ENCODE measurements at regions of chr20 and their contacts with region 1.

Region 1: DNA sequence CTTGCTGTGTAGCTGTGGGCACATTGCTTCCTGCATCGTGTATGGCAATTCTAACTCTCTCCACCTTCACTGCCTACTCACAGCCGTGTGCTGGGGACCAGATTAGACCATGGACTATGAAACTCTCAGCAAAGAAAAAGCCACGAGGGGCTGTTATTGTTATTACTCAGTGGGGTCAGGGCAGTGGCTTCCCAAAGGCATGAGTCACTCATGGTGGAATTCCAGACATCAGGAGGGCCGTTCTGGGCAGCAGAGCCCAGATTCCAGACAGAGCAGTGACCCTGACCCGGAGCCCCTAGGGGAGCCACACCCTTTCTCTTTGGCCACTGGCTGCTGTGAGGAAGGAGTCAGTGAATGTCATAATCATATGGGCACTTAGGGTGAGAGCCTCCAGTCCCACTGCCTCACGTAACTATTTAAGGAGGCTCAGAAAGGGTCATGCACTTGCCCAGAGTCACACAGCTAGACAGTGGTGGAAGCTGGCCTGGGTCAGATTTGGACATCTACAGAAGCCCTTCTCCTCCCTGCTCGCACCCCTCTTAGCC is 22.2 kb upstream of the CCN5 start:
- DNase-seq: peak; percentile 94
- ATAC-seq: peak; percentile 95
- H3K4me3 ChIP-seq: no peak overlapping the region
- H3K27ac ChIP-seq: peak overlapping the region; percentile 93 to 100
- H3K4me1 ChIP-seq: peaks cover 6 to 11% of the 10 kb centered on the region in 2 donors
- H3K27me3 ChIP-seq: no peaks in the 10 kb centered on the region

Region 2: DNA sequence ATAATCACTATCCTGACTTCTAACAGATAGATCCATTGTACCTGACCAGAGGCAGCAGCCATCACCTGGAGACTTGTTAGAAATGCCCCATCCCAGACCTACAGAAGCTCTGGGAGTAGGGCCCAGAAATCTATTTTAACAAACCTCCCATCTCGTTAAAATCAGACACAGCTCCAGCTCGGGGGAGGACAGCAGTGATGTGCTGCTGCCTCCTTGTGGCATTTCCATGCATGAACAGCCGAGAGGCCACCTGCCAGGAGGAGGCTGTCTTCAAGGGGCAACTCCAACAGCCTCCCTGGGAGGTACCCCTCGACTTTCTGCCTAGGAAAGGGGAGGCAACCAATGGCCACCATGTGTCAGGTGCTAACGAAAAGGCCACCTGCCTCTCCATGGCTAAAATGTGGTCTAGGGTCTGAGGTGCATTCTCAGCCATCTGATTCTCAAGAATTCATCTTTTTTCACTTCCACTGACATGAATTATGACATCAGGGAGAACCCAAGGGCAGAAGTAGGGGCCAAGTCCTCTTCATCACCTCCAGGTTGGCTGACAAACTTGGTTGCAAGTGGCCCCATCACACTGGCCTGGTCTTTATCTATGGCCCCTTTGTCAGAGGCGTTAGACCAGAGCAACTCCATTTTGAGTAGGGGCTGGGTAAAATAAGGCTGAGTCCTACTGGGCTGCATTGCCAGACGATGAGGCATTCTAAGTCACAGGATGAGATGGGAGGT is 40.5 kb after region 1 on chr20:
- intact Hi-C with region 1: loop called in 1 of 2 experiments (anchors 1 kb)
- DNase-seq: peak; percentile 77 to 87
- ATAC-seq: peak; percentile 78
- H3K4me3 ChIP-seq: no peak overlapping the region
- H3K27ac ChIP-seq: peak overlapping the region in 1 of 2 donors; percentile 91
- H3K4me1 ChIP-seq: peaks cover 0 to 4% of the 10 kb centered on the region in 2 donors
- H3K27me3 ChIP-seq: no peaks in the 10 kb centered on the region

Region 3: GRCh38 chr20:44861531-44862006 is 168.6 kb after region 1 on chr20:
- intact Hi-C with region 1: loop called (anchors 2 to 5 kb)
- DNase-seq: peak; percentile 83 to 86
- ATAC-seq: peak; percentile 91
- H3K4me3 ChIP-seq: no peak overlapping the region
- H3K27ac ChIP-seq: peak overlapping the region in 1 of 2 donors; percentile 39
- H3K4me1 ChIP-seq: peaks cover 5 to 11% of the 10 kb centered on the region in 2 donors
- H3K27me3 ChIP-seq: no peaks in the 10 kb centered on the region

Measured in aorta (tissue), 5 donors.